ENCODE measurements at regions of chr6 and their contacts with region 1.

Region 1: DNA sequence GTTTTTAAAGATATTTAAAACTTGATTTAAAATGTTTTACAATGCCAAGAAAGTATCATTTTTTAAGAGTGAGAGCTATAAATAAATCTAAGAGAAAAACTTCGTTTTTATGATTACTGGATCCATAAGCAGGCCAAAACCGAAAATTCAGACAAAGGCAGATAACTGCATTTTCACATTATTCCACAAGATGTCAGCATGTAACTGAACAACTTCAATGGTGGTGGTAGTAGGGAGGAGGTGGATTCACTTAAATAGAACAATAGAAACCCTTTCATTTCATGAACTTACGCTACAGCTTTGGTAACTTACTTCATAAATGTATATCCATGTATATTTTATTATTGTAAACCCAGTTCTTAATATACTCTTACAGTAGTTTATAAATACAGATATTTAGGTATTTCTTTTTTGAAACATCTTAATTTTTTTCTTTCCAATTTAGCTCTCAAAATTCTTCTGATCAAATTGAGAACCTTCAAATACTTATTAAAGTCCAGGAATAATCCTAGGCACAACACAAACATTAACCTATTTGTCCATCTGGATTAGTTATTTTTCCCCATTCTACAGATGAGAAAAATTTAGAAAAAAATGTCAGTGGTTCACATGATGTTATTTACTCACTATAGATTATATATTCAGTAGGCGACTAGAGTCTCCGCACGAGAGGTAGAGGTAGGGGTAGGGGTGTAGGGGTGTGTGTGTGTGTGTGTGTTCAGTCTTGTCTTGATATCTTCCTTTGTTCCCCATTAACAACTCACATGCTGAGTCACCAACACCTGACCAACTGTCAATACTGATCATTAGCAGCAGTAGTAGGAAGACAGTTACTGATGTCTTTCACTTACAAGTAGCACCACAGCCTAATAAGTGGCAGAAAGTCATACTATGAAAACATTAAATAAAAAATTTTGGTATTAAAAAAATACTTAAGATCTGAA is 111.5 kb downstream of the ARHGAP18 start:
- DNase-seq: peak in 1 of 2 donors; percentile 20
- ATAC-seq: peak in 7 of 8 donors; percentile 58 to 81 (median 74)
- H3K4me3 ChIP-seq: no peak overlapping the region
- H3K27ac ChIP-seq: no peak overlapping the region
- H3K4me1 ChIP-seq: peaks cover 0 to 8% (median 0%) of the 10 kb centered on the region in 9 donors
- H3K27me3 ChIP-seq: no peaks in the 10 kb centered on the region
- CTCF ChIP-seq: peak; percentile 59 to 93 (median 83)

Region 2: DNA sequence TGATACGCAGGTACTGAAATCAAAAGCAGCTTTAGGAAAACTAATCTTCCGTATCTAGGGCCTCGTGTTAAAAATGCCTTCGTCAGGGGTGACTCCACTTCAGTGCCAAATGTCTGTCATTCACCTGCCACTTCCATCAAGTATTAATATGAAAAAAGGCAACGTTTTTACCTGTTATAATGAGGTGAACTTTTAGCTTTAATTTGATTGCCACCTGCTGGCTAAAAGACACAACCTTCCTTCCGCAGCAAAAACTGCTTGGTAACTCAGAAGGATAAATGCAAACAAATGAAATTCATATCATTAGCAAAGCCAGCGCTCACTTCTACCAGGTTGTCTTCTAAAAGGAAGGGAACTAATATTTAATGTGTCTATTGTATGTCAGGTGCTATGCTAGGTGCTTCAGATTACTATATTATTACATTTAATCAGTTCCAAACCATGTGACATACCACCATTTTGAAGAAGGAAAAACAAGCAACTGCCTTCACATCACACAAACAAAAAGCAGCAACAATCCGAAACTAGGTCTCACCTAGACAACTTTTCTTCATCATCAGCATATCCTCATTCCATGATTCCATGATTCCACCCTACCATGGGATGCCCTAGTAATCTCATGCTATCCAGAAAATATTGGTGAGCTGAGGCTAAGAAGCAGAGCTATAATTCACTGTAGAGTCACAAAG is 132.1 kb after region 1 on chr6:
- intact Hi-C with region 1: loop called (anchors 1 to 10 kb)
- DNase-seq: no peak
- ATAC-seq: peak in 4 of 8 donors; percentile 42 to 59 (median 54)
- H3K4me3 ChIP-seq: no peak overlapping the region
- H3K27ac ChIP-seq: no peak overlapping the region
- H3K4me1 ChIP-seq: peaks cover 0 to 15% (median 0%) of the 10 kb centered on the region in 9 donors
- H3K27me3 ChIP-seq: no peaks in the 10 kb centered on the region
- CTCF ChIP-seq: peak; percentile 16 to 69 (median 61)

Region 3: GRCh38 chr6:129748212-129748900 is 149.8 kb after region 1 on chr6:
- intact Hi-C with region 1: loop called in 2 of 10 experiments (anchors 5 to 10 kb)
- DNase-seq: no peak
- ATAC-seq: peak in 7 of 8 donors; percentile 43 to 80 (median 67)
- H3K4me3 ChIP-seq: peak overlapping the region in 2 of 10 donors; percentile 4 to 8
- H3K27ac ChIP-seq: peak overlapping the region in 9 of 10 donors; percentile 36 to 80 (median 45)
- H3K4me1 ChIP-seq: peaks cover 0 to 57% (median 30%) of the 10 kb centered on the region in 9 donors
- H3K27me3 ChIP-seq: no peaks in the 10 kb centered on the region
- CTCF ChIP-seq: no peak

Region 4: DNA sequence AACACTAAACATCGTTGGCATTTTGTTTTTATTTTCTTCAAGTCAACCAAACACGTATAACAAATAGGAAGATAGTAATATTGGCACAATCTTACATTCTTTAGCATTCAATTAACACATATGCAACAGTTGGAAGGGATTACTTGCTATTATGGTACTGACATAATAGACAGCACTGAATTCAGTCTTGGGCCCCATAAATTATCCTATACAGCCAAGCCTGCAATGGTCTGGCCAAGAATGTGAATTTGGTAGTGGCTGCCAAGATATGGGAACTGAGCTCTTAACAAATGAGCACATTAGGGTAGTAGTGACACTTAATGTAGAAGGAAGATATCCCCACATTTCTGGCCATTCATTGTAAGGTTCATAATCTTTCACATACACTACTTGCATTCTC is 156.2 kb after region 1 on chr6:
- intact Hi-C with region 1: loop called in 3 of 10 experiments (anchors 1 to 10 kb)
- DNase-seq: no peak
- ATAC-seq: no peak
- H3K4me3 ChIP-seq: no peak overlapping the region
- H3K27ac ChIP-seq: no peak overlapping the region
- H3K4me1 ChIP-seq: peaks cover 0 to 28% (median 13%) of the 10 kb centered on the region in 9 donors
- H3K27me3 ChIP-seq: no peaks in the 10 kb centered on the region
- CTCF ChIP-seq: no peak

Region 5: DNA sequence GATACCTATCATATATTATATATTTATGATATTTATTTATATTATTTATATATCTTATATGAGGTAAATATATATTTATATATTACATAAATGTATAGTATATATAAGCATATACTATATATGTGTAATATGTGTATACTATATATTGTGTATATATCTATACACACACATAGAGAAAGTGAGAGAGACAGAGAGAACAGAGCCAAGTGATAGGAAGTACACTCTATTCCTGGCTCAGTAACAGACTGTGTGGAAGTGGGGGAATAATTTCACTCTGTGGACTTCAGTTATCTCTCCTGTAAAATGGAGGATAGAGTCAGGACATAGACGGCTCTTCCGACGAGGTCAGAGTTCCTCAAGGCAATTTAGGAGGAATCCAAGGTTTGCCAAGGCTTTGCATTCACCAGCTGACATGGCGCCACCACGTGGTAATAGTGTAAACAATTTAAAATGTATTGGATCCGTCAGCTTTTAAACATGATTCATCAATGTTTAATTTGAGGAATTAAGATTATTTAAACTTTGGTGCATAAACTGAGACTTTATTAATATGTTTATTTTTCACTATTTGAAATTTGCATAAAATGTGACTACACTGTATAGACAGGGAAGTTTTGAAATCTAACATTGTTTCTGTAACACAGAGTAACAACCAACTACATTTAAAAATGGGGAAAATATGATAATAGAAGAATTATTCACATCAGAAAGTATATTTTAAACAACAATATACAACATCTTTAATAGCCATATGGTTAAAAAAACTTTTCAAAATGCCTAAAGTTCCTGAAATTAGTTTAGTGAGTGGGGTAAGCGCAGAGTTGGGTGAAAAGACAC is 338.0 kb after region 1 on chr6:
- intact Hi-C with region 1: loop called in 6 of 10 experiments (anchors 2 to 10 kb)
- DNase-seq: peak in 1 of 2 donors; percentile 20
- ATAC-seq: peak in 1 of 8 donors; percentile 39
- H3K4me3 ChIP-seq: no peak overlapping the region
- H3K27ac ChIP-seq: no peak overlapping the region
- H3K4me1 ChIP-seq: no peaks in the 10 kb centered on the region
- H3K27me3 ChIP-seq: peaks cover 0 to 22% (median 9%) of the 10 kb centered on the region in 7 donors
- CTCF ChIP-seq: peak; percentile 6 to 69 (median 60)

Region 6: DNA sequence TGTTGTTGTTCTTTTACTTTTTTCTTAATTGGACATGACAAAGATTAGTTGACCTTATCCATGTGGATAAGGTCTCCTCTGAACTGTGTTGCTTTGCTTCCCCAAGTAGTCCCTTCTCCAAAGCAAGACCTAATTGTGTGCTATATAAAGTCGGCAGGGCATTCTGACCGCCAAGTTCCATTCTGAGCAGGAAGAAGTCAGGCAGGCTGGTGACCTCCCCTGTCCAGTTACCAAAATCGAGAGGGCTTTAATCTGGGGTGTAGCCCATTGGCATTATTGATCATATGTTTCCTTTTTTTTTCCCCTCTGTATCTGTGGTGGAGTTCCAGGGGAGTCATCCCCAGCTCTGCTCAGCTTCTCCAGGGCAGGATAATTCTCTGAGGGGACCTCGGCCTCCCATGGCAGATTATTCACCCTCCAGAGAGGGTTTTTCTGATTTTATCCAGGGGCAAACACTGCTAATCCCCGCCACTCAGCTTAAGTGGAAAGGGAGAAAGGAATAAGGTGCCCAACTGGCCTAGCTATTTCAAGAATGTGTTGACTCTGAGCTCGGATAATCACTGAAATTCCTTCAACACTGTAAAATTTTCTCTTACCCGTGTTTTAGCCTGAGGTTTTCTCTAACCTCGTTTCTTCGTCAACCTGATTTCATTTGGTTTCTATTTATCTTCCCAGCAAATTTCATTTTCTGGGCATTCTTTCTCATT is 348.1 kb after region 1 on chr6:
- intact Hi-C with region 1: loop called in 1 of 10 experiments (anchors 10 kb)
- DNase-seq: no peak
- ATAC-seq: no peak
- H3K4me3 ChIP-seq: no peak overlapping the region
- H3K27ac ChIP-seq: no peak overlapping the region
- H3K4me1 ChIP-seq: no peaks in the 10 kb centered on the region
- H3K27me3 ChIP-seq: peaks cover 0 to 12% (median 2%) of the 10 kb centered on the region in 7 donors
- CTCF ChIP-seq: no peak